ENCODE measurements at regions of chr18 and their contacts with region 1.

Region 1: DNA sequence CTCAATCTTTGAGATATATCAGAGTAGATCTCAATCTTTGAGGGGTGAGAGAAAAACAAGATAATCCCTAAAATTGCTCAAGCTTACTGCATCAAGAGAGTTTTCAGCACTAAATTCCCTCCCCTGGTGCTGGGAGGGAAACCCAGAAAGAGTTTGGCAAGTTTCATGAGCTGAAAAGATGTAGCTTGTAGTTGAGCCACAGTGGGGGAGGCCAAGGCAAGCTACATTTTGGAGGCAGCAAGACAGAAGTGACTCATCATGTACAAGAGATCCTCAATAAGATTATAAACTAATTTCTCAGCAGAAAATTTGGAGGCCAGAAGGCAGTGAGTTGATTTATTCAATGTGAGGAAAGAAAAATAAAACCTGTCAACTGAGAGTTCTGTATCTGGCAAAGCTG is 308.2 kb downstream of the PIEZO2 start:
- DNase-seq: no peak
- H3K4me3 ChIP-seq: no peak overlapping the region
- H3K27ac ChIP-seq: no peak overlapping the region
- H3K4me1 ChIP-seq: no peaks in the 10 kb centered on the region
- H3K27me3 ChIP-seq: no peaks in the 10 kb centered on the region
- CTCF ChIP-seq: no peak

Region 2: DNA sequence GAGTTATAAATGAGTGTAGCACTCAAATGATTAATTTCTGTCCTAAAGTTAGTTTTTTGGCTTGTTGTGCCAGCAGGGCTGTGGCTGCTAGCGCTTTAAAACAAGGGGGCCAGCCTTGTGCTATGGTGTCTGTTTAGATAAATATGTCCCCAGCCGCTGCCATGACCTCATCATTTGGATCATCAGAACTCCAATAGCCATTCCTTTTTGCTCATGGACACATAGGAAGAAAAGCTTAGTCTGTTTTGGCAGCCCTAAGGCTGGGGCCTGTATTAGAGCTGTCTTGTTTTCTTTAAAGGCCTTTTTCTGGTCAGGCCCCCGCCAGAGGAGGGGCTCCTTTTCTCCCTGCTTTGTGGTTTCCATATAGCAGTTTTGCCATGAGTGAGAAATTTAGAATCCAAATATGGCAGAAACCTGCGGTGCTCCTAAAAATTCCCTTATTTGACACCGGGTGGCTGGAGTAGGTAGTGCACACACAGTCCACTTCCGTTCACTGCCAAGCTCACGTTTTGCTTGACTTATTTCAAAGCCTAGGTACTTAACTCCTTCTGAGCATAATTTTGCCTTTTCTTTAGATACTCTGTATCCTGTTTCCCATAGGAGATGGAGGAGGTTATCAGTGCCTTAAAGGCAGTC is 707.8 kb after region 1 on chr18:
- CTCF ChIA-PET with region 1: no interaction called
- dilution Hi-C with region 1: no loop called
- in situ Hi-C with region 1: loop called in 1 of 2 experiments (anchors 25 kb)
- intact Hi-C with region 1: no loop called
- DNase-seq: no peak
- H3K4me3 ChIP-seq: no peak overlapping the region
- H3K27ac ChIP-seq: no peak overlapping the region
- H3K4me1 ChIP-seq: no peaks in the 10 kb centered on the region
- H3K27me3 ChIP-seq: no peaks in the 10 kb centered on the region
- CTCF ChIP-seq: no peak

Measured in mammary epithelial cell (primary cell).